ENCODE measurements at regions of chr12 and their contacts with region 1.

Region 1: DNA sequence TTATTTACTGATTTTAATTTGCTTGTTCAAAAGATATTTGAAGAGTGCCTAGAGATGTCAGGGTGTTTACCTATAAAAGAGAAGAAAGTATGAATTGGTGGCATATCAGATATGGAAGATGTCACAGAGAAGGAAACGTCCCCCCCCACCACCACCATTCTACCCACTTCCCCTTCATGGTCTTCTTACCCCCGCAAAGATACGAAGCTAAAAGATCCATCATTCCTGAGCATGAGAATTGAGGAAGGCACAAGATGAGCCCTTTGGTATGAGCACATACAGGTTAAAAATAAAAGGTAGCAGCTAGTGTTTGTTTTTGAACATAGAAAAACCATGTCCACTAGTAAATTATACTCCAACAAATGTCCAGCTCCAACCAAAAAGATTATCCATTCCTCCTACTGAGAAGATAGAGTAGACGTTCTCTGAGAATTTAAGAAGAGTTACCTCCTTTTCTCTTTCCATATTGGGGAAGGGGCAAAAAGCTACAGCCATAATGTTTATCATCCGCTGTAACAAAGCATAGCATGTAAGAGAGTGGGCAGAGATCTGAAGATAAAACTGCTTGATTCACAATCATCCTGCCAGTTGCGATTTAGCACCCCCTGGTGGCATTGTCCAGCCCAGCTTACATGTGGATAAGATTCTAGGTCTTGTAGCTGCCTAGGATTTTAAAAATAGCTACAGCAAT is 29.1 kb downstream of the NFYB start:
- DNase-seq: peak; percentile 86
- H3K4me3 Mint-ChIP-seq: no peak overlapping the region
- H3K27ac Mint-ChIP-seq: no peak overlapping the region
- H3K4me1 Mint-ChIP-seq: peaks cover 15% of the 10 kb centered on the region
- H3K27me3 Mint-ChIP-seq: no peaks in the 10 kb centered on the region
- CTCF ChIP-seq: peak; percentile 80

Region 2: DNA sequence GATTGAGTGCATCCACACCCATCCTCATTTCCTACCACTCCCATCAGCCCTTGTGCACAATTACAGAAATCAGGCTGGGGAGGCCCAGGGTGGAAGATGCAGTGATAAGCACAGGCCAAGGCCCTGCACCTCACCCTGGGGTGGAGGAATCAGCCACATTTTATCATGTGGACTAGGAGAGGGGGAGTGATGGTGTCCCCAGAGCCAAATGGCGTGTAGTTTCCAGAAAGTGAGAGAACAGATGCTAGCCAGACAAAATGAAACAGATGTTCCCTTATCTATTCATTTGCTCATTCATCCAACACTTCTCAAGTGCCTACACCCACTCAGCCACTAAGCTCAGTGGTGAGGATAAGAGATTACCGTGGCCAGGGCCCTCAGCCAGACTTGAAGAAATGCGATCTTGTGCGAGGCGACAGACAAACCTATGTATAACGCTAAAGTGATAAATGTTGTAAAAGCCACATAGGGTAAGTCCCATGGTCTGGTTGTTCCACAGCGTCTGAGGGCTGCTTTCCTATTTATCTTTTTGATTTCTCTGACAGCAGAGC is 428.2 kb before region 1 on chr12:
- CTCF ChIA-PET with region 1: no interaction called
- POLR2A ChIA-PET with region 1: no interaction called
- intact Hi-C with region 1: no loop called
- DNase-seq: no peak
- H3K4me3 Mint-ChIP-seq: no peak overlapping the region
- H3K27ac Mint-ChIP-seq: no peak overlapping the region
- H3K4me1 Mint-ChIP-seq: no peaks in the 10 kb centered on the region
- H3K27me3 Mint-ChIP-seq: peaks cover 13% of the 10 kb centered on the region
- CTCF ChIP-seq: no peak

Region 3: GRCh38 chr12:103877934-103878510 is 230.9 kb before region 1 on chr12:
- CTCF ChIA-PET with region 1: interaction called, 22 read pairs
- POLR2A ChIA-PET with region 1: no interaction called
- intact Hi-C with region 1: loop called (anchors 1 kb)
- DNase-seq: peak; percentile 88
- H3K4me3 Mint-ChIP-seq: no peak overlapping the region
- H3K27ac Mint-ChIP-seq: no peak overlapping the region
- H3K4me1 Mint-ChIP-seq: peaks cover 6% of the 10 kb centered on the region
- H3K27me3 Mint-ChIP-seq: no peaks in the 10 kb centered on the region
- CTCF ChIP-seq: peak; percentile 58

Region 4: GRCh38 chr12:103956516-103957027 is 152.3 kb before region 1 on chr12:
- CTCF ChIA-PET with region 1: interaction called, 40 read pairs
- POLR2A ChIA-PET with region 1: interaction called, 4 read pairs
- intact Hi-C with region 1: loop called (anchors 2 kb)
- DNase-seq: no peak
- H3K4me3 Mint-ChIP-seq: peak overlapping the region; percentile 87
- H3K27ac Mint-ChIP-seq: peak overlapping the region; percentile 93
- H3K4me1 Mint-ChIP-seq: peaks cover 28% of the 10 kb centered on the region
- H3K27me3 Mint-ChIP-seq: no peaks in the 10 kb centered on the region
- CTCF ChIP-seq: peak; percentile 5

Region 5: DNA sequence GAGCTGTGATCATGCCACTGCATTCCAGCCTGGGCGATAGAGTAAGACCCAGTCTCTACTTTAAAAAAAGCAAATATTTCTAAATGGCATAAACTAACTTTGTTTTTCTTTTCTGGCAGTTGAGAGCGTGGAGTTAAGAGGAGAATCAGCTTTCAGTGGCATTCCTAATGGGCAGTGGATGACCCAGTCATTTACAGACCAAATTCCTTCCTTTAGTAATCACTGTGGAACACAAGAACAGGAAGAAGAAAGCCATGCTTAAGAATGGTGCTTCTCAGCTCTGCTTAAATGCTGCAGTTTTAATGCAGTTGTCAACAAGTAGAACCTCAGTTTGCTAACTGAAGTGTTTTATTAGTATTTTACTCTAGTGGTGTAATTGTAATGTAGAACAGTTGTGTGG is 122.1 kb before region 1 on chr12:
- CTCF ChIA-PET with region 1: interaction called, 11 read pairs
- POLR2A ChIA-PET with region 1: no interaction called
- intact Hi-C with region 1: no loop called
- DNase-seq: no peak
- H3K4me3 Mint-ChIP-seq: no peak overlapping the region
- H3K27ac Mint-ChIP-seq: no peak overlapping the region
- H3K4me1 Mint-ChIP-seq: no peaks in the 10 kb centered on the region
- H3K27me3 Mint-ChIP-seq: no peaks in the 10 kb centered on the region
- CTCF ChIP-seq: no peak

Region 6: GRCh38 chr12:104083769-104084475 is 25.0 kb before region 1 on chr12:
- CTCF ChIA-PET with region 1: interaction called, 20 read pairs
- POLR2A ChIA-PET with region 1: interaction called, 4 read pairs
- intact Hi-C with region 1: no loop called
- DNase-seq: no peak
- H3K4me3 Mint-ChIP-seq: no peak overlapping the region
- H3K27ac Mint-ChIP-seq: no peak overlapping the region
- H3K4me1 Mint-ChIP-seq: no peaks in the 10 kb centered on the region
- H3K27me3 Mint-ChIP-seq: no peaks in the 10 kb centered on the region
- CTCF ChIP-seq: no peak

Region 7: DNA sequence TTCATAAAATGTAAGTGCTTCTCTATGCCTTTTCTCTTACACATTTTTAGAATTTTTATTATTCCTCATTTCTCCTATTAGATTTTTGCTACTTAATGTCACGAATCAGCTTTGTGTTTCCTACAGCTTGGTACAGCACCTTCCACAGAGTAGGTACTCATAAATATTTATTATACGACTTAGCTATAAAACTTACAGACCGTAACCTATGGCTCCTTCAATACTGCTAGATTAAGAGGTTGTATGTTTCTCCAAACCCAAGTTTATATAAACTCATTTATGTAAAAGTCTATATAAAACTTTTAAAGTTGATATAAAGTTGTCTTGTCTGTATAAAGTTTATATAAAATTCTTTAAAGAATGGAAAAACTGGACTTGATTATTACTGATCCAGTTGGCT is 17.6 kb after region 1 on chr12:
- CTCF ChIA-PET with region 1: interaction called, 30 read pairs
- POLR2A ChIA-PET with region 1: interaction called, 5 read pairs
- intact Hi-C with region 1: no loop called
- DNase-seq: no peak
- H3K4me3 Mint-ChIP-seq: no peak overlapping the region
- H3K27ac Mint-ChIP-seq: peak overlapping the region; percentile 71
- H3K4me1 Mint-ChIP-seq: peaks cover 5% of the 10 kb centered on the region
- H3K27me3 Mint-ChIP-seq: no peaks in the 10 kb centered on the region
- CTCF ChIP-seq: no peak